AG04449 (cell line): ENCODE measurements at regions of chr11 and their contacts with region 1.

Region 1: DNA sequence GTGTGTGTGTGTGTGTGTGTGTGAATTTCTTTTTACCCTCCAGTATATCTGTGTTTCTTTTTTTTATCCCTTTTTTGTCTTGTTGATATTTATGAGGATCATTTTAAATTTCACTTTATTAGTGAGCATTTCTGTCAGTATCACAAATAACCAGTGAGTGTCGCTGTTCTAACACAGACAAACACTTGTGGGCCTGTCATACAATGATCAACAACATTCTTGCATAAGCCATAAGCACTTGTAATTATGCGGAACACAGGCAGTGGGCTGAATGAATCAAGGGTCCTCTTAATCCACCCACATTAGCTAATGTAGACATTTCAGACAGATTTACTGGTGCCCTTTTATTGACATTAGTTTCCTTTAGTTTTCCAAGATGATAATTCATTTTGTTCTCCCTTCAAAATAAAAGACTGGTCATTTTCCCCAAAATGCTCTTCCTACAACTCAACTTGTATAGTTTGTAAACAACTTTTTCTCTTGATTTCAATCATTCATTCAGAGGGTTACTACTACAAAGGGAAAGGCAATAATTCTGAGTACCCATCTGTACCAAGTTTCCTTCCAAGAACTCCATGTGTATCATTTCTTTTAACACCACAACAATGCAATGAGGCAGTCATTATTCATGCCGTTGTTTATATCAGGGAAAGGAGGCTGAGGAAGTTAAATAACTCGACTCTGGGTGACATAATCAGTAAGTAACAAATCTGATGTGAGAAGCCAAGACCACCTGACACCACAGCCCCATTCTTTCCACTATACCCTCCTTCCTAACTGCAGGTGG is 34.5 kb upstream of the ANO3 start:
- DNase-seq: peak; percentile 41
- H3K4me3 ChIP-seq: no peak overlapping the region
- CTCF ChIP-seq: peak; percentile 60

Region 2: DNA sequence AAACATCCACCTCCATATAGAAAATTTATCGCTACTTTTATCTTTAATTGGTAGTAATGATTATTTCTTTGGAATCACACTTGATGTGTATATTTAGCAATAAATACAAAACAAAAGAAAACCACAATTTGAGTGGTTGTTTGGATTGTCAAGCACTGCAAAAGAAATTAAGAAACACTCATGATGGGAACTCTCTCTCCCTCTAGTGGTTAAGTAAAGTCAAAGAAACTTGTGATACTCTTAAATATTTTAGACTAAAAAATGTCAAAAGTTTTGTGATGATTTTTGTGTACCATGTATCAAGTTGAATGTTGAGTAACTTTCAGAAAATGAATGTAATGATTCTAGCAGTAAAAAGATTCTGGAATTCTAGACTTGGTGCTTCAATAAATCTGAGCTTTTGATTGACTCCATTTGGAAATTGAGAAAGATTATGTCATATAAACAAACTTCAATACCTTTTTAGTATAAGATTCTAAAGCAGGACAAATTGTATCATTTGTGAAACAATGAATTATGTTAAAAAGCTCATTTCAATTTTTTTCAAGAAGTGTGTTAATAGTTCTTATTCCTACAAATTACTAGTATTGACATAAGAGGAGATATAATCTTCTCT is 253.9 kb after region 1 on chr11:
- CTCF ChIA-PET with region 1: interaction called, 18 read pairs
- POLR2A ChIA-PET with region 1: no interaction called
- DNase-seq: no peak
- H3K4me3 ChIP-seq: no peak overlapping the region
- CTCF ChIP-seq: peak; percentile 12

Region 3: DNA sequence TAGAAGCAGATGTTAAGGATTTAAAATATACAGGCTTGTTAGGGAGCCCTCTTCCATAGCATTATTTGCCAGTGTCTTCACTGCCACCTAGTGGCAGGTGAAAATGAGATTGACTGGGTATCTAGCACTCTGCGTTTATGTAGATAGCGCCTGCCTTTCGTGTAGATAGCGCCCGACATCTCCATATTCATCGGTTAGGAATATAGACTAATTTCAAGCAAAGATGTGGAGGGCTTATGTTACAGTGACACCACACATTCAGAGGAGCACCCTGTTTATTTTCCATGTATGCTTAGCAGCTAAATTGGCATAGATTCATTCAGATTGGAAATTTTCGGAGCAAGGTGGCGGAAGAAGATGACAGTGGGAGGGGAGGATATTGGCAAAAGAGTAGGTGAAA is 352.5 kb after region 1 on chr11:
- CTCF ChIA-PET with region 1: interaction called, 78 read pairs
- POLR2A ChIA-PET with region 1: no interaction called
- DNase-seq: peak; percentile 29
- H3K4me3 ChIP-seq: no peak overlapping the region
- CTCF ChIP-seq: peak; percentile 68